ENCODE measurements at regions of chr1 and their contacts with region 1.

Region 1: GRCh38 chr1:9867408-9868243 is 42.4 kb downstream of the CTNNBIP1 start:
- DNase-seq: peak; percentile 70 to 79
- ATAC-seq: peak; percentile 81 to 92 (median 84)
- H3K4me3 ChIP-seq: no peak overlapping the region
- H3K27ac ChIP-seq: no peak overlapping the region
- H3K4me1 ChIP-seq: peaks cover 0 to 25% (median 14%) of the 10 kb centered on the region in 9 donors
- H3K27me3 ChIP-seq: no peaks in the 10 kb centered on the region
- CTCF ChIP-seq: peak; percentile 94 to 99 (median 98)

Region 2: DNA sequence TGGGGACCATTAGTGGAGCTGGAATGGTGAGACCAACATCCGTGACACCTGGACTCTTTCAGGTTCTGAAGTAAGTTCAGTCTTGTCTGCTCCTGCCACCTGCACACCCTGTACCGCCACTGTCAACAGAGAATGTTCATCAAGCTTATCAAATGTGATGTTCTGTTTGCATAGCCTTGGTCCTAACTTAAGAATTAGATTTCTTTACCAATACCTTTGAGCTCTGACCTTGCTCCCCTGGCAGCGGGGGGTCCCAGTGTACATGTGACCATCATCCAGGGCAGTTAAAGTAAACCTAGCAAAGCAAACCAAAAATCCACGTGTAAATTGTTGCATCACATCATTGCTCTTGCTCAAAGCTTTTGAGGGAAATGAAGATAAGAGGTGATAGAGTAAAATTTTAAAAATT is 313.9 kb before region 1 on chr1:
- intact Hi-C with region 1: no loop called
- DNase-seq: no peak
- ATAC-seq: no peak
- H3K4me3 ChIP-seq: no peak overlapping the region
- H3K27ac ChIP-seq: no peak overlapping the region
- H3K4me1 ChIP-seq: peaks cover 2 to 44% (median 19%) of the 10 kb centered on the region in 9 donors
- H3K27me3 ChIP-seq: no peaks in the 10 kb centered on the region
- CTCF ChIP-seq: no peak

Region 3: GRCh38 chr1:9724706-9725476 is 142.7 kb before region 1 on chr1:
- intact Hi-C with region 1: loop called in 9 of 10 experiments (anchors 5 to 10 kb)
- DNase-seq: peak in 1 of 2 donors; percentile 59
- ATAC-seq: peak in 7 of 8 donors; percentile 41 to 68 (median 51)
- H3K4me3 ChIP-seq: no peak overlapping the region
- H3K27ac ChIP-seq: no peak overlapping the region
- H3K4me1 ChIP-seq: no peaks in the 10 kb centered on the region
- H3K27me3 ChIP-seq: no peaks in the 10 kb centered on the region
- CTCF ChIP-seq: peak; percentile 32 to 91 (median 71)

Region 4: DNA sequence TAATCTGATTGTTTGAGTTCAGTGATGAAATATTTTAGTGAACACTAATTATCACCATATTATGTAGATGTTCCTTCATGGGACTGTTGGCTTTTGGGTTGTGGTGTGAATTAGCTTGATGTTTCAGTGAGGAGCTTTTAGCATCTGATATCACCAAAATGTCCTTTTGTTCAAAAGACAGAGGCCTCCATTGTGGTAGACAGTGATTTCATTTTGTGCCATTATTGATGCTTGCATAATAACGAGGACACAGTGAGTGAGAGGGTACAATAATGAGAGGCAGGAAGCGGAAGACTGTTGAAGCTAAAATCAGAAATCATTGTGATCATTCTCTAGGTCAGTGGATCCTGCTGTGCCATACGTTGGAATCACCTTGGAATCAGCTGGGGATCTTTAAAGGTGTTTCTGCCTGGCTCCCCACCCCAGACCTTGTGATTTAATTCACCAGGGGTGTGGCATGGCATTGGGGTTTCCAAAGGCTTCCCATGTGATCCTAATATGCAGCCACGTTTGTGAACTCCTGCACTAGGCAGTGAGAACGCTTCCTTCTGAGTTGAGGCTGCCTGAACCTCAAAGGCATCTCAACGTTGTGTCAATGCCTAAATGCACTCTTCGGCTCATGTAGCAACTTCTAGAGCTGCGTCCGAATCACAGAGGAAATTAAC is 260.6 kb after region 1 on chr1:
- intact Hi-C with region 1: no loop called
- DNase-seq: no peak
- ATAC-seq: no peak
- H3K4me3 ChIP-seq: no peak overlapping the region
- H3K27ac ChIP-seq: no peak overlapping the region
- H3K4me1 ChIP-seq: no peaks in the 10 kb centered on the region
- H3K27me3 ChIP-seq: no peaks in the 10 kb centered on the region
- CTCF ChIP-seq: no peak

Measured in heart right ventricle (tissue), 16 donors.